ENCODE measurements at regions of chr6 and their contacts with region 1.

Region 1: GRCh38 chr6:159252955-159253508 is 83.8 kb downstream of the FNDC1 start:
- DNase-seq: peak; percentile 20
- H3K4me3 Mint-ChIP-seq: no peak overlapping the region
- H3K27ac Mint-ChIP-seq: no peak overlapping the region
- H3K4me1 Mint-ChIP-seq: no peaks in the 10 kb centered on the region
- H3K27me3 Mint-ChIP-seq: peaks cover 63% of the 10 kb centered on the region
- CTCF ChIP-seq: peak; percentile 21

Region 2: DNA sequence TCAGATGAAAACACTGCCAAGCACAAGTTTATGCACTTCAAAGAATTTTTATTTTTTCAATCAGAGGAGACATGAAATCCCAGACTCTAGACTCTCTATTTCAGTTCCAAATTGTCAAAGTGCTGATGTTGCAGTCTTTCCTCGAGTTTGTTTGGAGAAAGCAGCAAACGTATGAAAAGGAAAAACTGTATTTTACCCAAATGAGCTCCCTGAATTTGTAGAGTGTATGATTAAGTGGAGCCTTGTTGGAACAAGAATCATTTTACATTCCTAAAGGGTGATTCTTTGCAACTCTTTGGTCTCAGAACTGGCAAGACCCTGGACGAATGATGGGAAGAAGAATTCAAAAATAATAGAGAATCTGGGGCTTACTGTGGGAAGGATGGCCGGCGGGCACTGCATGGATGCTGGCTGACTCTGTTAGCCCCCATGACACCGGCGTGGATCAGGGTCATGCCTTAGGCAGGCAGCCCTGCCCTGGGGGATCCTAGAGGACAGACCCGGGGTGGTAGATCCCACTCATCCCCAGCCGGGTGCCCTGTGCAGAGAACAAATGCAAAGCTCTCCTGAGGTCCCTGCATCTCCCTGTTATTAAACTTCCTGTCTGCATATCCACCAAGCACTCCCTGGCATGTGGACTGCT is 123.6 kb after region 1 on chr6:
- CTCF ChIA-PET with region 1: no interaction called
- intact Hi-C with region 1: no loop called
- DNase-seq: no peak
- H3K4me3 Mint-ChIP-seq: no peak overlapping the region
- H3K27ac Mint-ChIP-seq: no peak overlapping the region
- H3K4me1 Mint-ChIP-seq: no peaks in the 10 kb centered on the region
- H3K27me3 Mint-ChIP-seq: peaks cover 99% of the 10 kb centered on the region
- CTCF ChIP-seq: no peak

Region 3: DNA sequence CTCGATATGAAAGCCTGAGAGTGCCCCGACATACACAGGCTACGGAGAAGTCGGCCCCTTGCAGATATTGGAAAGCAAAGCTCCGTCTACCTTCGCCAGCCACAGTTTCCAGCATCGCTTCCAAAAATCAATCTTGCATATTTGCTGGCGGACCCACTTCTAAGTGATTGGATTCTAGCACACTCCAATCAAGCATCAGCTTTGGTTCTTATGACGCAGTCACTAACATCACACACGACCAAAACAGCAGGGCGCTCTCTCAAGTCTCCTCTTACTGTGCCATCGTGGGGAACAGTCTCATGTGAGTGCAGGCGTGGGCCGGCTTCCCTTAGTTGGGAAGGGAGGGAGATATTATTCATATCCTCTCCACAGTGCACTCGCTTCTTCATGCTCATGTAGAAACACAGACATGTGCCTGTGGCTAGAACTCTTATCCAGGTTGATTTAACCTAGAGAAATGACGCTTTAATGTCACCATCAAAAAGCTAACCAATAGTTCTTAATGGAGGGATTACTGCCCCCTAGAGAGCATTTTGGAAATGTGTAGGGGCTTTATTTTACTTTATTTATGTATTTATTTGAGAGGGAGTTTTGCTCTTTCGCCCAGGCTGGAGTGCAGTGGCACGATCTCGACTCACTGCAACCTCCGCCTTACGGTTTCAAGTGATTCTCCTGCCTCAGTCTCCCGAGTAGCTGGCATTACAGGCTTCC is 210.2 kb after region 1 on chr6:
- CTCF ChIA-PET with region 1: interaction called, 10 read pairs
- intact Hi-C with region 1: loop called (anchors 10 kb)
- DNase-seq: no peak
- H3K4me3 Mint-ChIP-seq: no peak overlapping the region
- H3K27ac Mint-ChIP-seq: no peak overlapping the region
- H3K4me1 Mint-ChIP-seq: no peaks in the 10 kb centered on the region
- H3K27me3 Mint-ChIP-seq: peaks cover 19% of the 10 kb centered on the region
- CTCF ChIP-seq: peak; percentile 13

Region 4: GRCh38 chr6:159513074-159513720 is 260.2 kb after region 1 on chr6:
- CTCF ChIA-PET with region 1: no interaction called
- intact Hi-C with region 1: no loop called
- DNase-seq: no peak
- H3K4me3 Mint-ChIP-seq: no peak overlapping the region
- H3K27ac Mint-ChIP-seq: no peak overlapping the region
- H3K4me1 Mint-ChIP-seq: no peaks in the 10 kb centered on the region
- H3K27me3 Mint-ChIP-seq: peaks cover 52% of the 10 kb centered on the region
- CTCF ChIP-seq: no peak

Region 5: GRCh38 chr6:159608961-159609651 is 356.1 kb after region 1 on chr6:
- CTCF ChIA-PET with region 1: interaction called, 3 read pairs
- intact Hi-C with region 1: loop called (anchors 10 kb)
- DNase-seq: peak; percentile 58
- H3K4me3 Mint-ChIP-seq: no peak overlapping the region
- H3K27ac Mint-ChIP-seq: no peak overlapping the region
- H3K4me1 Mint-ChIP-seq: no peaks in the 10 kb centered on the region
- H3K27me3 Mint-ChIP-seq: no peaks in the 10 kb centered on the region
- CTCF ChIP-seq: peak; percentile 67

Region 6: DNA sequence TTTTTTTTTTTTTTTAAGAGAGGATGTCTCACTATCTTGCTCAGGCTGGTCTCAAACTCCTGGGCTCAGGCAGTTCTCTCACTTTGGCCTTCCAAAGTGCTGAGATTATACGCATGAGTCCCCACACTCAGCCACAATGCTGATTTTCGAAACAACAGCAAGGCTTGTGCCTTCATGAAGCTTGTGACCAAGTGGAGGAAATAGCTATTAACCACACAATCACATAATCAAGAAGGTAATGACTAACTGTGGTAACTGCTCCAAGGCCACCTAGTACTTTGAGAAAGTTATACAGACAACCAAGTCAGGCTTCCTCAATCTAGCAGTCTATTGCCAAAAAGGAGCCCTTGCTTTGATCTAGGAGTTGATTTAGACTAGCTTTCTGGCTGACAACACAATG is 393.7 kb after region 1 on chr6:
- CTCF ChIA-PET with region 1: no interaction called
- intact Hi-C with region 1: loop called (anchors 10 kb)
- DNase-seq: peak; percentile 3
- H3K4me3 Mint-ChIP-seq: no peak overlapping the region
- H3K27ac Mint-ChIP-seq: peak overlapping the region; percentile 5
- H3K4me1 Mint-ChIP-seq: peaks cover 30% of the 10 kb centered on the region
- H3K27me3 Mint-ChIP-seq: no peaks in the 10 kb centered on the region
- CTCF ChIP-seq: no peak

Region 7: GRCh38 chr6:159654483-159655098 is 401.6 kb after region 1 on chr6:
- CTCF ChIA-PET with region 1: interaction called, 13 read pairs
- intact Hi-C with region 1: loop called (anchors 10 kb)
- DNase-seq: peak; percentile 24
- H3K4me3 Mint-ChIP-seq: no peak overlapping the region
- H3K27ac Mint-ChIP-seq: no peak overlapping the region
- H3K4me1 Mint-ChIP-seq: no peaks in the 10 kb centered on the region
- H3K27me3 Mint-ChIP-seq: no peaks in the 10 kb centered on the region
- CTCF ChIP-seq: peak; percentile 55

Measured in Calu3 (cell line).